Activated T-helper 2 cell treated with anti-CD3 and anti-CD28 coated beads, Interferon-gamma antibody, Interleukin-2, Interleukin-4, amounts not matched to agents 10 μg/mL and 5 μg/mL and 100 μg/mL, durations not matched to agents 14 hours and 24 hours and 36 hours (primary cell): ENCODE measurements at regions of chr4 and their contacts with region 1.

Region 1: GRCh38 chr4:174365018-174365587 is 81.4 kb downstream of the CEP44 start:
- DNase-seq: no peak
- H3K4me3 Mint-ChIP-seq: no peak overlapping the region
- H3K27ac Mint-ChIP-seq: no peak overlapping the region
- H3K4me1 Mint-ChIP-seq: no peaks in the 10 kb centered on the region
- H3K27me3 Mint-ChIP-seq: peaks cover 21% of the 10 kb centered on the region

Region 2: DNA sequence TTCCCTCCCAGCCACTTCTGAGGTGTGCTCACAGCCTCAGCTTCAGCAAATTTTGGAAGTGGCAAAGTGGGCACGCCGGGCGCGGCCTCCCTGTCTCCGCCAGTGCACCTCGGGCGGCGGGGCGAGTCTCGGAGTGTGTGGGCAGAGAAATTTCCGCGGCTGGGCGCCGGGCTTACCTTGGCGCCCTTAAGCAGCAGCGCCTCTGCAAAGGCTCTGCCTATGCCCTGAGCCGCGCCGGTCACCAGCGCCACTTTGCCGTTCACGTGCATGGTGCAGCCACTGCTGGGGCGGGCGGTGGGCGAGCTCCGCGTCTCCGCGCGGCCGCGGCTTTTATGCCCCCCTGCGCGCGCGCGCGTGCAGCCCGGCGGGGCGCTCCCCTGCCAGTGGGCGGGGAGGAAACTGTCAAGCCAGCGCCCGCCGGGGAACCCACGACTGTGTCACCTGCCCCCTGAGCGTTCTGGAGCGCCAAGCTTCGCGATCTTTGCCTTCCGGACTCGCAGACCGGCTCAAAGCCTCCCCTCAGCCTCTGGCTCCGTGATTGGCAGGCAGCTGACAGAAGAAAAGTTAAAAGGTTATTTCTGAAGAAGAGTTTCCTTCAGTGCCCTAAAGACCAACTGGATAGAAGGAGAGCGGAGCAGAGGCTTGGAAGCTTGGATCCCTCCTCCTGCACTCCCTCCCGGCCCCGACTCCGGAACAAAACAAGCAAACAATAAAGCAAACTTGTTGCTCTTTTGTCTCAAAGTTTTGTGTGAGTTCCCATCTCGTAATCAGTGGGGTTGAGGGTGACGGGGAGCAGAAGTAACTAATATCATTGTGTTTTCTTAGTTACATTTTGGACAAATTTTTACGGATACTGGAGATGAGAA is 157.3 kb after region 1 on chr4 and contains the start of gene HPGD:
- intact Hi-C with region 1: loop called (anchors 10 kb)
- DNase-seq: peak; percentile 47
- H3K4me3 Mint-ChIP-seq: peak within 1 kb of the TSS; percentile 77
- H3K27ac Mint-ChIP-seq: no peak within 1 kb of the TSS
- H3K4me1 Mint-ChIP-seq: peaks cover 12% of the 10 kb centered on the region
- H3K27me3 Mint-ChIP-seq: peaks cover 68% of the 10 kb centered on the region
- total RNA-seq, gene HPGD: 0.48 and 1.2 TPM in 2 replicates

Region 3: DNA sequence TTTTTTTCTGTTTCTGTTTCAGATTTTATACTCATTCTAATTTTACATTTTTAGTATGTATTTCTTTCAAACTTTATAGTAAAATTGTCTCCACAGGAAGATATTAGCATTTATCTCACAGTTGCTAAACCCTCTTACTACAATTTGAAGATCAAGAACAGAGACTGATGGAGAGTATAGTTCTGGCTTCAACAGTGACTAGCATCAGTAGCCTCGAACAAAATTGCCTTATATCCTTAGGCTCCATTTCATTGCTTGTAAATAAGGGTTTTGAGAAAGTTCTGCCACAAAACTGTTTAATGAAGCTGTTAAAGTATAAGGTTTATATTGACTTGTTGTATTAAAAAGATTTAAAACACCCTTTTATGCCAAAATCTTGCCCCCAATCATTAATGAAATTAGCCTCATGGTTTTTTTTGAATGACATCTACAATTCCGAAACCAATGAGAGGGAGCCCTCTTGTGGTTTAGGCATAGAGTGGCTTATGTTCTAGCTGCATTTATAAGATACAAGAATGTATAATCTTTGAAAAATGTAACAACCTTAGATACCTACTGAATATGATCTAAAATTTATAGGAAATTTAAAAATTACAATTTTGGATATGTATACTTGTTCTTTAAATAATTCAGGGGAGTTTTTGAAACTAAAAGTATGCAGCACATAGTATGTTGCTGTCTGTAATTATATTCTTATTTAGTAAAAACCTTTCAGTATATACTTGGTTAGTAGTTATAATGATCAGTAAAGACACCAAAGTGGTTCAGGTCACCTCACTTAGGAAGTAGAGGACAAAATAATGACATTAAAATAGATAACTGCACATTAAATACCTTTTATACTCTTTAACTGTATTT is 267.0 kb after region 1 on chr4:
- intact Hi-C with region 1: loop called (anchors 1 kb)
- DNase-seq: no peak
- H3K4me3 Mint-ChIP-seq: no peak overlapping the region
- H3K27ac Mint-ChIP-seq: no peak overlapping the region
- H3K4me1 Mint-ChIP-seq: peaks cover 5% of the 10 kb centered on the region
- H3K27me3 Mint-ChIP-seq: no peaks in the 10 kb centered on the region

Region 4: DNA sequence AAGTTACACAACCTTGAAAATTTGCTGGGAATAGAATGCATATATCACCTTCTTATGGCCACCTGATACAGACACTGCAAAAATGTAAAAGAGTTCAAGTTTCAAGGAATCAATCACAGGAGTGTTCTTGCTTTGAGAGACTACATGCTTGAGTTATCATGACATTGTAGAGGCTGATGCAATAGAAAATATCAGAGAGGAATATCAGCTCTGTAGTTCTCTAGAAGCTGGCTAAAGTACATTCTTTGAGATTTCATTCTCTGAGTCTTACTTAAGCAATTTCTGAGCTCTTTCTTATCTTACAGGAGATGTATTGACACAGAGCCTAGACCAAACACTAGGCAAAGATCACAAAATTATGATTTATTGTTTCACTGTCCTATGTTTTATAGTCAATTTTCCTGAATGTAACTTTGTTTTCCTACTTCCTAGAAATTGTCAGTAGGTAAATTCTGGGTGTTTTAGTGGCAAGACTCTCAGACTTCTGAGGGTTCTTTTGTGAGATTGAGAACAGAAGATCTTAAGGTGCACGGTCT is 309.3 kb after region 1 on chr4:
- intact Hi-C with region 1: no loop called
- DNase-seq: no peak
- H3K4me3 Mint-ChIP-seq: no peak overlapping the region
- H3K27ac Mint-ChIP-seq: no peak overlapping the region
- H3K4me1 Mint-ChIP-seq: no peaks in the 10 kb centered on the region
- H3K27me3 Mint-ChIP-seq: no peaks in the 10 kb centered on the region

Region 5: DNA sequence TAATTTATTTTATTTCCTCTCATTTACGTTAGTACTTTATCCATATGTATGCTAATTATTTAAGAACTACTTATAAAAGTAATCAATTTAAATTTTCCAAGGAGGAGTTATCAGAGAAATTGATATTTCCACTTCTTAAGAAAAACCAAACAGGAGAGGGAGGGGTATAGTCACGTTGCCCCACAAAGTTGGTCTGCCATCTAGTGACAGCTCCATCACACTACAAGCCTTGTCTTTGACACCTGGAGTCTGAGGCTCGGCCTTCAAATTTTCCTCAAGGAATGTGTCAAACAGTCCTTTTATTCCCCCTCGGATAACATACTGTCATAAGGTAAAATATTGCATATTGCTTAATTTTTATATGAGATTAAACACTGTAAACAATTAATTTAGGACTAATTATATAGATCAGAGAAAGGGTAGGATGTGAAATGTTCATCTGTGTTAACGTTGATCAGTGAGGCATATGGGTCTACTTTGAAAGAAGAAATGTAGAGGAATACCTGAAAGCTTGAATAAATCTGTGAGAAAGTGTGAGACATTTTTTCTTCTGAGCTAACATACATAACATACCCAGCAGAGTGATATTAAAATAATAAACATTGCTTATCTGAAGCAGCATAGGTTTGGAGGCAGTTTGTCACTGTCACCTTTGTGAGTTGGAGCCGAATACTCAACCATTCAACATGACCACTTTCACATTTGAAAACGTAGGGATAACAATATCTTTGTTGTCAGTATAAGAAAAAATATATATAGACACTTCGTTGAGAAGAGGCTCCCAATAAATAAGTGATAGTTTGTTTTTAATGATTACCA is 349.5 kb after region 1 on chr4:
- intact Hi-C with region 1: loop called (anchors 1 kb)
- DNase-seq: no peak
- H3K4me3 Mint-ChIP-seq: no peak overlapping the region
- H3K27ac Mint-ChIP-seq: no peak overlapping the region
- H3K4me1 Mint-ChIP-seq: no peaks in the 10 kb centered on the region
- H3K27me3 Mint-ChIP-seq: no peaks in the 10 kb centered on the region

Region 6: DNA sequence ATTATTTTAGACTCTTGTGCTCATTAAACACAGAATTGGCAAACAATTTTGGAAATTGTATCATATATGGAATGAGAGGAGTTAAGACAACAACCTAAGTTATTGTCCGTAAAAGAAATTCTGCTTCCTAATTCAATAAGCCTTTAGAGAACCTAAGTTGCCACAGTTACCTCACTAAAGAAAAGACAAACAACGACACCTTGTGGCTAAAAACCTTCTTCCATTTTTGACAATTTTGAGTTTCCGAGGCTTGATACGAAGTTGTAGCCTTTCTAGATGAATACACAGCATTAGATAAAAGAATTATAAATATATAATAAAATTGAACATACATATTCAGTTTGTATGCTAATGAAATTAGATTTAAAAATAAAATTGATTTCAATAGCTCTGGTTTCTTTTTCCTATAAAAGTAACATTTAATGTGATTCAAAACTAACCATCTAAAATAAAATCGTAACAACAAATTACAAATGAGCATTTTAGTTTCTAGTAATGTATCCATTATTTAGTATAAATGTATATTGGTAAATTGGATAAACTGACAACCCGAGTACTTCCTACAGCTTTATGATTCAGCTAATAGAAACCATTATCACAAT is 1171.8 kb after region 1 on chr4:
- intact Hi-C with region 1: loop called (anchors 10 kb)
- DNase-seq: no peak
- H3K4me3 Mint-ChIP-seq: no peak overlapping the region
- H3K27ac Mint-ChIP-seq: no peak overlapping the region
- H3K4me1 Mint-ChIP-seq: no peaks in the 10 kb centered on the region
- H3K27me3 Mint-ChIP-seq: no peaks in the 10 kb centered on the region